HepG2 (cell line): ENCODE measurements at regions of chr1 and their contacts with region 1.

Region 1: DNA sequence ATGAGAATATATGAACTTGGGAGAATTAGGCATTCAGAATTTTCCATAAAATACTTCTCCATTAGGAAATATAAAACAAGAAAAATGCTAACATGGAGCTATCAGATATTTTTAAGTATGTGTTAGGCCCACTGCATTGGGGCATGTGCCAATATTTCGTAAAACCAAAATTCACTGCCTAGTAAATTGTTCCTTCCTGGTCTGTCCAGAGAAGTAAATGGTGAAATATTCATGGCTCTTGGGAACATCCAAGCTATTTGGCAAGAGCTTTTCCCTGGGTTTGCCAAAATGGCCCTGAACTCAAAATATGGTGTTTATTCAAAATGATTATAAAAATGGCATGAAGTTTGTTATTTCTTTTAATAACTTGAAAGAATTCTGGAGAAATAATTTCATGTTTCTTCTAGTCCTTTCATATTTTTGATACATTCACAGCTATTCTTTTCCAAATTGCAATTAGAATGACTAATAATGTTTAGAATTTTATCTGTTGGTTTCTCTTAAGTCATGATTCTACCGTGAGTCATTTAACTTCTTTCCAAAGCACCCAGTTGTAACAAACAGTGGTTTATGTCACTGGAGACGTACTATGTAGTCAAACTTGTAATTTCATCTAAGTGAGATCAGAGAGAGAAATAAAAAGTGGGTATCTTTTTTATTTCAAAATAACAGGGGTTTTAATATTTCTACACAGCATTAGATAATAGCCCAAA is 25.7 kb upstream of the SLC19A2 start:
- DNase-seq: no peak
- ATAC-seq: no peak
- H3K4me3 ChIP-seq: no peak overlapping the region
- H3K27ac ChIP-seq: no peak overlapping the region
- H3K4me1 ChIP-seq: peaks cover 48% of the 10 kb centered on the region
- H3K27me3 ChIP-seq: no peaks in the 10 kb centered on the region
- CTCF ChIP-seq: no peak
- EP300 ChIP-seq: no peak
- POLR2A ChIP-seq: no peak
- RAD21 ChIP-seq: no peak

Region 2: DNA sequence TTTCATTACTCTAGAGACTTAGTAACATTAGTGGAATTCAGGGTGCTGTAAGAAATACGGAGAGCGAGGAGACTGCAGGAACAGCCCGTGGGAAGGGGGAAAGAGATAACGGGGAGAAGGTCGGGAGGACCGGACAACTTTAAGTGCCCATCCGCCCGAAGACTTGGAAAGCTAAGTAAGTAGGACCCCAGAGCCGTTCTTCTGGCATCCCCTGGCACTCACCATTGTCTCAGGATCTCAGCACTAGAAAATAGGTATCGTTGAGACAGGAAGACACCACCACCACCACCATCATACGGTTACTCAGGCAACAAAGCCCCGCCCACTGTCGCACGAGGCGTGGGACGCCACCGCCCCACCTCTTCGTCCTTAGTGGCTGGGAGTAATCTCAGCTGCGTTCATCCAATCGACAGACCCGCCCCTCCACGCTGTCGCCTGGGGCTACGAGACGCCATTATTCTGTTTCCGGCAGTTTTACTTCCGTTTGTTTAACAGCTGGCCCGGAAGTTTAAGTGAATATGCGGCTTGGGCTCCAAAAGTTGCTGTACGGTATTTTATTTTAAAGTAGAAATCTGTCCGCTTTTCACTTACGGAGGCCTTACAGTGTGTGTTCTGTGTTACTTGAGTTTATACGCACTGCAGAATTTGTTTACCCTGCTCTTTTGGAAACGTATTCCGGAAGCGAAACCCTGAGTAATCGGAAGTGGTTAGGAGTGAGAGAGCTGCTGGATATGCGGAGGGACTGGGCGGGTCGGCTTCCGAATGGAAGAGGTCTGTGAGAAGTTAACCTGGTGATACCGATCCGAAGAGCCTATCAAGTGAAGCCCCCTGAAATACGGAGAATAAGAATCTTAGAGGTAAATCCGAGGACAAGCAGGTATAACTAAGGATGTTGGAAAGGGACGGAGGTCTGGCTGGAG is 143.7 kb before region 1 on chr1 and contains the starts of genes BLZF1 and NME7:
- CTCF ChIA-PET with region 1: no interaction called
- POLR2A ChIA-PET with region 1: no interaction called
- in situ Hi-C with region 1: no loop called
- intact Hi-C with region 1: loop called (anchors 1 kb)
- DNase-seq: peak; percentile 94
- ATAC-seq: peak; percentile 99
- H3K4me3 ChIP-seq: peak within 1 kb of the TSS; percentile 85 to 93 (median 92)
- H3K27ac ChIP-seq: peak within 1 kb of the TSS; percentile 79
- H3K4me1 ChIP-seq: peaks cover 27% of the 10 kb centered on the region
- H3K27me3 ChIP-seq: no peaks in the 10 kb centered on the region; a peak in 2 of 5 replicates
- CTCF ChIP-seq: no peak
- EP300 ChIP-seq: no peak
- POLR2A ChIP-seq: peak in 1 of 2 experiments; percentile 55
- RAD21 ChIP-seq: no peak
- total RNA-seq, gene BLZF1: 13.7 and 18.7 TPM in 2 replicates
- total RNA-seq, gene NME7: 22.5 and 29.5 TPM in 2 replicates

Region 3: GRCh38 chr1:169466259-169467230 is 44.9 kb before region 1 on chr1:
- CTCF ChIA-PET with region 1: interaction called, 7 read pairs
- POLR2A ChIA-PET with region 1: no interaction called
- in situ Hi-C with region 1: no loop called
- intact Hi-C with region 1: loop called (anchors 2 kb)
- DNase-seq: peak; percentile 24
- ATAC-seq: peak; percentile 69
- H3K4me3 ChIP-seq: no peak overlapping the region
- H3K27ac ChIP-seq: no peak overlapping the region
- H3K4me1 ChIP-seq: no peaks in the 10 kb centered on the region
- H3K27me3 ChIP-seq: no peaks in the 10 kb centered on the region
- CTCF ChIP-seq: peak; percentile 43
- EP300 ChIP-seq: no peak
- POLR2A ChIP-seq: no peak
- RAD21 ChIP-seq: peak; percentile 25; the same call in 1 of the 2 replicates

Region 4: DNA sequence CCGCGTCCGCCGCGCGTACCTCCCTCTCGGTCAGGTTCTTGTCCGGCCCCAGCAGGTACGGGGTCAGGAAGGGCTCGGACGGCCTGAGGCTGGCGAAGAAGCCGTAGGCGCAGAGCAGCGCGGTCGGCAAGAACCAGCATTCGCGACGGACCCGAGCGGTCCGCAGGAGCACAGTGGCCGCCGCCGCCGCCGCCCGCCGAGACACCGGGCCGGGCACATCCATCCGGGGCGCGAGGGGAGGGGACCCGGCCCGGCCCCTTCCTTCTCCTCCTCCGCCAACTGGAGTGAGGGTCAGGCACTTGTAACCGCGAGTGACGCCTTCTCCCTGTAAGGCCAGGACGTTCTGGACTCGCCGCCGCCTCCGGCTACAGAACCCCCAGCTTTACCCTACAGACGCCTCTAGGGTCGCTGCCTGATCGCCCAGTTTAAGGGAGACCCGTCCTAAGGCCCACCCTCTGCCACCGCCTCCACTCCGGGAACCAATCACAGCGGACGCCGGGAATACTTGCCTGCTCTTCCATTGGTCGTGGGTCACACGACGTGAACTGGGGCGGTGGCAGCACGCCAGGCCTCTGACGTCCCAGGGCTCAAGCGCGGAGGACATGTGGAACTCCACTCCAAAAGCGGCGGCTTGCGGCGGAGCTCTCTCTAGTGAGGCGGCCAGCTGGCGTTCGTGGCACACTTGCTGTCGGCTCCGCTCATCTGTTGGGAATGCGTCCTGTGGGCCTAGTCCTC is 25.8 kb before region 1 on chr1 and contains the start of gene SLC19A2:
- CTCF ChIA-PET with region 1: no interaction called
- POLR2A ChIA-PET with region 1: interaction called, 33 read pairs
- in situ Hi-C with region 1: no loop called
- intact Hi-C with region 1: loop called (anchors 1 kb)
- DNase-seq: peak; percentile 98
- ATAC-seq: peak; percentile 98
- H3K4me3 ChIP-seq: peak within 1 kb of the TSS; percentile 74 to 87 (median 81)
- H3K27ac ChIP-seq: peak within 1 kb of the TSS; percentile 95
- H3K4me1 ChIP-seq: peaks cover 62% of the 10 kb centered on the region
- H3K27me3 ChIP-seq: no peaks in the 10 kb centered on the region; a peak in 1 of 5 replicates
- CTCF ChIP-seq: peak; percentile 51
- EP300 ChIP-seq: peak; percentile 11 to 43; a peak in 1 of 4 replicates
- POLR2A ChIP-seq: peak; percentile 95 to 96
- RAD21 ChIP-seq: peak; percentile 11; the same call in 1 of the 2 replicates
- total RNA-seq, gene SLC19A2: 19.1 and 30.4 TPM in 2 replicates